Heart right ventricle (tissue), 16 donors: ENCODE measurements at regions of chr1 and their contacts with region 1.

Region 1: DNA sequence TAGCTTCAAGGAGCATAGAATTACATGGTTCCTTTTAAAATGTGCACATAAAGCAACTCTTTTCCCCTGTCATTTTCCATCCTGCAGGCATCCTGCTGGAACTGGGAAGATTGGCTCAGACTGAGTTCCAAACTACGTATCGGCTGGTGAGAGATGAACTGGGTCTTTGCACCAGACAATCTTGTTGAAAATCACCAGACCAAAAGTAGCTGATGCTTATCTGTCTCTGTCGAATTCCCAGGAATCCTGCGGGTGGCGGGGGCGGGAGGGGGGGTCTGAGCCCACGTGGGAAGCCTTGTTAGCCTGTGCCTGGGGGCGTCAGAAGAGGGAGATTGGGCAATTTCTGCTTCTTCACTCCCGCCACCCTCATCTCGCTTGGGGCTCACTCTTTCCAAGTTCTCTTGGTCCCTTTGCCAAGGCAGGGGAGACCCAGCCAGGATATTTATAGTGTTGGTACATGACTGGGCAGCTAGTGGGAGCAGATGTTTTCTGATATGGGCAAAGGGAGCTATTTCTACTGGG is 90.1 kb upstream of the SLC25A33 start:
- DNase-seq: peak in 1 of 2 donors; percentile 48
- ATAC-seq: peak; percentile 63 to 94 (median 86)
- H3K4me3 ChIP-seq: no peak overlapping the region
- H3K27ac ChIP-seq: peak overlapping the region in 8 of 10 donors; percentile 7 to 70 (median 44)
- H3K4me1 ChIP-seq: peaks cover 6 to 31% (median 20%) of the 10 kb centered on the region in 9 donors
- H3K27me3 ChIP-seq: no peaks in the 10 kb centered on the region
- CTCF ChIP-seq: no peak

Region 2: GRCh38 chr1:9413148-9413876 is 35.9 kb before region 1 on chr1:
- intact Hi-C with region 1: loop called in 1 of 10 experiments (anchors 2 kb)
- DNase-seq: peak; percentile 59 to 64
- ATAC-seq: peak; percentile 64 to 92 (median 83)
- H3K4me3 ChIP-seq: no peak overlapping the region
- H3K27ac ChIP-seq: peak overlapping the region; percentile 72 to 92 (median 86)
- H3K4me1 ChIP-seq: peaks cover 8 to 33% (median 24%) of the 10 kb centered on the region in 9 donors
- H3K27me3 ChIP-seq: no peaks in the 10 kb centered on the region
- CTCF ChIP-seq: peak in 1 of 9 donors; percentile 15